OCI-LY7 (cell line): ENCODE measurements at regions of chr4 and their contacts with region 1.

Region 1: DNA sequence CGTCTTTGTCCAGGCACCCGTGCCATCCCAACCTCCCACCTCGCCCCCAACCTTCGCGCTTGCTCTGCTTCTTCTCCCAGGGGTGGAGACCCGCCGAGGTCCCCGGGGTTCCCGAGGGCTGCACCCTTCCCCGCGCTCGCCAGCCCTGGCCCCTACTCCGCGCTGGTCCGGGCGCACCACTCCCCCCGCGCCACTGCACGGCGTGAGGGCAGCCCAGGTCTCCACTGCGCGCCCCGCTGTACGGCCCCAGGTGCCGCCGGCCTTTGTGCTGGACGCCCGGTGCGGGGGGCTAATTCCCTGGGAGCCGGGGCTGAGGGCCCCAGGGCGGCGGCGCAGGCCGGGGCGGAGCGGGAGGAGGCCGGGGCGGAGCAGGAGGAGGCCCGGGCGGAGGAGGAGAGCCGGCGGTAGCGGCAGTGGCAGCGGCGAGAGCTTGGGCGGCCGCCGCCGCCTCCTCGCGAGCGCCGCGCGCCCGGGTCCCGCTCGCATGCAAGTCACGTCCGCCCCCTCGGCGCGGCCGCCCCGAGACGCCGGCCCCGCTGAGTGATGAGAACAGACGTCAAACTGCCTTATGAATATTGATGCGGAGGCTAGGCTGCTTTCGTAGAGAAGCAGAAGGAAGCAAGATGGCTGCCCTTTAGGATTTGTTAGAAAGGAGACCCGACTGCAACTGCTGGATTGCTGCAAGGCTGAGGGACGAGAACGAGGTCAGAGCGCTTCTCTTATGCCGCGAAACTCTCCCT is at the start of gene TET2:
- DNase-seq: peak; percentile 50
- H3K4me3 ChIP-seq: peak within 1 kb of the TSS; percentile 57
- H3K27ac ChIP-seq: no peak within 1 kb of the TSS
- H3K4me1 ChIP-seq: peaks cover 10% of the 10 kb centered on the region
- CTCF ChIP-seq: no peak
- total RNA-seq, gene TET2: 0.19 and 0.21 TPM in 2 replicates

Region 2: DNA sequence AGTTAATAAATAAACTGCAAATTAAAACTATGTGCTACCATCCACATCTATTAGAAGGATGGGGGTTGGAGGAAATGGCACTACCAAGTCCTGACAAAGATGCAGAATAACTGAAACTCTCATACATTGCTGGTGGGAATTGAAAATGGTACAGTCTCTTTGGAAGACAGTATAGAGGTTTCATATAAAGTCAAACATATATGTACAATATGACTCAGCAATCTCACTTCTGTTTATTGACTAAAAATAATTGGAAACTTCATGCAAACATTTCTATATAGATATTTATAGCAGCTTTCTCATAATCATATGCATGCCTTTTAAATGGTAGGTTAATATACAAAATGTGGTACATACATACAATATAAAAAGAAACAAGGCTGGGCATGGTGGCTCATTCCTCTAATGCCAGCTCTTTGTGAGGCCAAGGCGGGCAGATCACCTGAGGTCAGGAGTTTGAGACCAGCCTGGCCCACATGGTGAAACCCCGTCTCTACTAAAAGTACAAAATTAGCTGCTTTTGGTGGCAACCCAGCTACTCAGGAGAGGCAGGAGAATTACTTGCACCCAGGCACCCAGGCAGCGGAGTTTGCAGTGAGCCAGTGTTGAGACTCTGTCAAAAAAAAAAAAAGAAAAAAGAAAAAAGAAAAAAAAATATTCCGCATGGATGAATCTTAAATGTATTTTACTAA is 426.8 kb before region 1 on chr4:
- CTCF ChIA-PET with region 1: no interaction called
- POLR2A ChIA-PET with region 1: no interaction called
- intact Hi-C with region 1: loop called (anchors 5 kb)
- DNase-seq: no peak
- H3K4me3 ChIP-seq: no peak overlapping the region
- H3K27ac ChIP-seq: no peak overlapping the region
- H3K4me1 ChIP-seq: no peaks in the 10 kb centered on the region
- CTCF ChIP-seq: no peak

Region 3: DNA sequence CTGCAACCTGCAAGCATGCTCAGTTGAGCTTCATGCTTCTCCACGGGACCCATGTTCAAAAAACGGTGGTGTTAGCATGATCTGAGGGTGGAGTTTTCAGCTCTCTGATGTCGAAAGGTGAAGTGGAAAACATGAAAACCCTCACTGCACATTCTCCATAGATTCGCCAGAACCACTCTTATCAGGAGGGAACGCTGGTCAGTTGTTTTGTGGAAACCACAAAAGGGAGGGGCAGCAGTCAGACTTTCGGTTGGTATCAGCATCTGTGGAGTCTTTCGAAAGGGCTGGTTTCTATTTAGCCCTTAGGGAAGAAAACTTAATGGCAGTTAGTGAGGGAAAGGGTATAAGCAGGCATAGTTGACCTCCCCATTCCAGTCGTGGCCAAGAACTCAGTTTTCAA is 314.8 kb after region 1 on chr4:
- CTCF ChIA-PET with region 1: no interaction called
- POLR2A ChIA-PET with region 1: no interaction called
- intact Hi-C with region 1: loop called (anchors 2 kb)
- DNase-seq: no peak
- H3K4me3 ChIP-seq: no peak overlapping the region
- H3K27ac ChIP-seq: no peak overlapping the region
- H3K4me1 ChIP-seq: no peaks in the 10 kb centered on the region
- CTCF ChIP-seq: no peak